HCT116 (cell line): ENCODE measurements at regions of chr4 and their contacts with region 1.

Region 1: DNA sequence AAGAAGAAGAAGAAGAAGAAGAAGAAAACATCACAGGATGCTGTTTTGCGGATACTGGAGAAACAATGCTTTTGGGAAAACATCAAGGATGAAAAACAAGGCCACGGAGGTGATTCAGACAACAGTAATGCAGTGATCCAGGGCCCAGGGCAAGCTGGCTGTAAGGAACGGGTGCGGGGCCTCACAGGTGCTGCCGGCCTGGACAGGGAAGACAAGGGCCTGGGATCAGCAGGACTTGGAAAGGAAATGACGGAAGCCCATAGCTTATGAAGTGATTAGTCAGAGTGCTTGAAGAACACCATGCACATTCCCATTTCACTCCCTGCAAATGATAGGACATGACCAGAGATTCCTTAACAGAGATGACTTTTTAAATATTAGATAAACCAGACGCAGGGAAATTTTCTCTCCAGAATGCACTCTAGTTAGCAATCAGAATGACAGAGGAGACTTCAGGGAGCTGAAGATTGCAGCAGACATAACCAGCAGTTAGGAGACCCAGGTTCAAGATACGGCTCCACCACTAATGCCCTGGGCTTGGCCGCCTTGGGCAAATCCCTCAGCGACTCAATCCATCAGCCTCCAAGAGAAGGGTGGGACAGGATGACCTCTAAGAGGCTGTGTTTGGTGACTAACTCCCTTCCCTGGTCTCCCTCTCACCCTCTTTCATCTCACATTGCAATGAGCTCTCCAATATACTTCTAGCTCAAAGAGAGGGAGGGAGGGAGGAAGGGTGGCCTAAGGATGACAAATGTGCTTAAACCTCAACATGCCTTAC is 54.1 kb downstream of the APBB2 start:
- DNase-seq: peak; percentile 93
- ATAC-seq: peak; percentile 82
- H3K4me3 ChIP-seq: peak overlapping the region; percentile 17 to 34; a peak in 3 of 4 replicates
- H3K27ac ChIP-seq: peak overlapping the region; percentile 88
- H3K4me1 ChIP-seq: peaks cover 74 to 100% of the 10 kb centered on the region in 2 experiments
- H3K27me3 ChIP-seq: no peaks in the 10 kb centered on the region
- CTCF ChIP-seq: no peak
- POLR2A ChIP-seq: no peak
- RAD21 ChIP-seq: peak; percentile 21; the same call in 1 of the 2 replicates

Region 2: DNA sequence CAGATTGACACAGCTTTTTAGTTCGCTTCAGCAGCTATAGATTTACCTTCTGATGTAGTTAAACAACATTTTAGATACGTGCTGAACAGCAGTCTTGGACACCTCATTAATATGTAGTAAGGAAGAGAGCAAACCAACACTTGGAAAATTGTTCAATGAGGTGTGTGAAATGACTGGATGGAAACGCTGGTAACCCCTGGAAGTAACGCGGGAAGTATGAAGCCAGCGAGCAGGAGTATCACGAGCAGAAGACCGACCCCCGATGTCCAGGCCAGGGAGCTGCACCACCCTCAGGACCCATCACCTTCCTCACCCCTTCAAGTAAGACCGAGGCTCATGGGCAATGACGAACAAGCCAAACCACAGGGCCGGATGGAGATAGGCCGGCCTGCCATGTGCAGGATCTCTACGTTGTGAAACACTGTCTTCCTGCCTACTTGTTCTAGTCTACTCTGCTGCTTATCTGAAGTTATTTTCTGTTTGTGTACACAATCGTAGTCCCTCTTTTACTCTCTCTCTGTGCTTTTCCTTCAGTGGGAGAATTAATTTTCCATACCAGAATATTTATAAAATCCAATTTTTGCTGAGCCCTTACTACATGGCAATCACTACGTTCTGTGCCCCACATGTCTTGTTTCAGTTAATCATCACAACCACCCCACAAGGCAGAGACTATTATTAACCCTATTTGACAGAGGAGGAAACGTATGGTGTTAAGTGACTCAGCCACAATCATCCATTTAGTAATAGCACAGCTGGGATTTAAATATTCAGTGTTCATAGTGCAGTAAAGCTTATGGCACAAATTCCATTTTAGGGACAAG is 167.5 kb before region 1 on chr4:
- CTCF ChIA-PET with region 1: no interaction called
- POLR2A ChIA-PET with region 1: interaction called, 4 read pairs
- RAD21 ChIA-PET with region 1: no interaction called
- intact Hi-C with region 1: loop called (anchors 5 kb)
- DNase-seq: no peak
- ATAC-seq: 0 out of 2 replicates have a peak, but pooled peaks have one; percentile 13
- H3K4me3 ChIP-seq: no peak overlapping the region
- H3K27ac ChIP-seq: no peak overlapping the region; the same call in 1 of the 2 replicates
- H3K4me1 ChIP-seq: peaks cover 51 to 84% of the 10 kb centered on the region in 2 experiments
- H3K27me3 ChIP-seq: no peaks in the 10 kb centered on the region
- CTCF ChIP-seq: no peak
- POLR2A ChIP-seq: no peak
- RAD21 ChIP-seq: no peak

Region 3: DNA sequence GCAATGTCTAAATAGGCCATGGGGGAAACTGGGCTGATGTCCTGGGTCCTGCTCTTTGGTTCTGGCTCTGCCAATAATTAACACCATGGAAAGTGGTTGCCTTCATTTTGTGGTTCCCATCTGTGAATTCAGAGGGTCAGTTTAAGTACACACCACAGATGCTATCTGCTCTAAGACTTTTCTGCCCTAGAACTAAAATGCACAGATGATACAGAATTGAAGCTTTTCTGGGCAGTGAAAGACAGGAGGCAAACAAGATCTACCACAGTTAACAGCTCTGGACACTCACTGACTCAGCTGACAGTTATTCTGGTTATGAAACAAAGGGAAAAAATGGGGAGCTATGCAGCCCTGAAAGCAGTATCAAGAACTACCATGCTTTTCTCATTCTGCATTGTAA is 16.8 kb after region 1 on chr4:
- CTCF ChIA-PET with region 1: no interaction called
- POLR2A ChIA-PET with region 1: interaction called, 12 read pairs
- RAD21 ChIA-PET with region 1: no interaction called
- intact Hi-C with region 1: no loop called
- DNase-seq: no peak
- ATAC-seq: peak; percentile 58
- H3K4me3 ChIP-seq: no peak overlapping the region
- H3K27ac ChIP-seq: no peak overlapping the region
- H3K4me1 ChIP-seq: peaks cover 11 to 24% of the 10 kb centered on the region in 2 experiments
- H3K27me3 ChIP-seq: no peaks in the 10 kb centered on the region
- CTCF ChIP-seq: no peak
- POLR2A ChIP-seq: no peak
- RAD21 ChIP-seq: peak; percentile 16; the same call in 1 of the 2 replicates